ENCODE measurements at regions of chr13 and their contacts with region 1.

Region 1: DNA sequence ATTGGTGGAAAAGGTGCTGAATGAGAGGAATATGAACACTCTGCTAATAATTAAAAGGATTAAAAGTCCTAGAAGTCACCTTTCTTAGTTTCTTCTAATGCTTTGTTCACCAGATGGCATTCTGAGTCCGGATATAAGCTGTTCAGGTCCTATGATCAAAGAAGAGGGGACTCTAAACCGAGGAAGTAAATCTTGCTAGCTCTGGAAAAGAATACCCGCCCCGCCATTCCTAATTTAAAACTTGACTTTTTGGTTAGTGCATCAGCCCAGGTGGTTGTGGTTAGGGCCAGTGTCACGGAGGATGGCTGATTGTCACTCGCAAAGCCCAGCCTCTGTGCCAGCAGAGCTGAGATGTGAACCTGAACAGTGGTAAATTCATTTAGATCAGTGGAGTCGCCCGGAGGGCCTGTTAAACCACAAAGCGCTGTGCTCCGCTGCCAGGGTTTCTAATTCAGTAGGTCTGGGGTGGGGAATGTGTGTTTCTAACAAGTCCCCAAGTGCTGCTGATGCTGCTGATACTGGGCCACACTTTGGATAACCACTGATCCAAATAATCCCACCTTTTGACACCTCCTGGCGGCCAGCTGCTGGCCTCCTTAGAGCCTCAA is 425.4 kb downstream of the DCT start:
- DNase-seq: no peak
- H3K4me3 ChIP-seq: no peak overlapping the region
- H3K27ac ChIP-seq: no peak overlapping the region
- H3K4me1 ChIP-seq: no peaks in the 10 kb centered on the region
- H3K27me3 ChIP-seq: no peaks in the 10 kb centered on the region
- CTCF ChIP-seq: no peak
- POLR2A ChIP-seq: no peak

Region 2: DNA sequence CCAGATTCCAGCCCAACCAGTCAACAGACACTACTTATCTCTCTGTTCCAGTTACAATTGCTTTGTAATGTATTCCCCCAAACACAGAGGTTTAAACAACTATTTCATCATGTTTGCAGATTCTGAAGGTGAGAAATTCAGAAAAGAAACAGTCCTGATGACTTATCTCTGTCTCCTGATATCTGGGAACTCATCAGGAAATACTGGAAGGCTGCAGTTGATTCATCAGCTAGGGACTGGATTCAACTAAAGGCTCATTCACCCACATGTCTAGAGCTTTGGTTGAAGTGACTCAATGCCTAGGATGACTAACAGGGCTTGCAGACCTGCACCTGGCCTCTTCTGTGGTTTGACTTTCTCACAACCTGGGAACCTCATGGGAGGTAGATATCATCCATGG is 884.1 kb before region 1 on chr13:
- intact Hi-C with region 1: loop called (anchors 5 kb)
- DNase-seq: no peak
- H3K4me3 ChIP-seq: no peak overlapping the region
- H3K27ac ChIP-seq: no peak overlapping the region
- H3K4me1 ChIP-seq: no peaks in the 10 kb centered on the region
- H3K27me3 ChIP-seq: no peaks in the 10 kb centered on the region
- CTCF ChIP-seq: no peak
- POLR2A ChIP-seq: no peak

Region 3: GRCh38 chr13:93455861-93456260 is 598.2 kb before region 1 on chr13:
- intact Hi-C with region 1: loop called (anchors 5 kb)
- DNase-seq: no peak
- H3K4me3 ChIP-seq: no peak overlapping the region
- H3K27ac ChIP-seq: no peak overlapping the region
- H3K4me1 ChIP-seq: no peaks in the 10 kb centered on the region
- H3K27me3 ChIP-seq: no peaks in the 10 kb centered on the region
- CTCF ChIP-seq: no peak
- POLR2A ChIP-seq: no peak

Region 4: GRCh38 chr13:93976528-93976927 is 77.6 kb before region 1 on chr13:
- intact Hi-C with region 1: no loop called
- DNase-seq: no peak
- H3K4me3 ChIP-seq: no peak overlapping the region
- H3K27ac ChIP-seq: no peak overlapping the region
- H3K4me1 ChIP-seq: no peaks in the 10 kb centered on the region
- H3K27me3 ChIP-seq: no peaks in the 10 kb centered on the region
- CTCF ChIP-seq: no peak
- POLR2A ChIP-seq: no peak

Region 5: GRCh38 chr13:94345374-94346195 is 291.5 kb after region 1 on chr13:
- intact Hi-C with region 1: no loop called
- DNase-seq: no peak
- H3K4me3 ChIP-seq: no peak overlapping the region
- H3K27ac ChIP-seq: no peak overlapping the region
- H3K4me1 ChIP-seq: no peaks in the 10 kb centered on the region
- H3K27me3 ChIP-seq: no peaks in the 10 kb centered on the region
- CTCF ChIP-seq: no peak
- POLR2A ChIP-seq: no peak